Posterior vena cava (tissue), 2 donors: ENCODE measurements at regions of chr9 and their contacts with region 1.

Region 1: DNA sequence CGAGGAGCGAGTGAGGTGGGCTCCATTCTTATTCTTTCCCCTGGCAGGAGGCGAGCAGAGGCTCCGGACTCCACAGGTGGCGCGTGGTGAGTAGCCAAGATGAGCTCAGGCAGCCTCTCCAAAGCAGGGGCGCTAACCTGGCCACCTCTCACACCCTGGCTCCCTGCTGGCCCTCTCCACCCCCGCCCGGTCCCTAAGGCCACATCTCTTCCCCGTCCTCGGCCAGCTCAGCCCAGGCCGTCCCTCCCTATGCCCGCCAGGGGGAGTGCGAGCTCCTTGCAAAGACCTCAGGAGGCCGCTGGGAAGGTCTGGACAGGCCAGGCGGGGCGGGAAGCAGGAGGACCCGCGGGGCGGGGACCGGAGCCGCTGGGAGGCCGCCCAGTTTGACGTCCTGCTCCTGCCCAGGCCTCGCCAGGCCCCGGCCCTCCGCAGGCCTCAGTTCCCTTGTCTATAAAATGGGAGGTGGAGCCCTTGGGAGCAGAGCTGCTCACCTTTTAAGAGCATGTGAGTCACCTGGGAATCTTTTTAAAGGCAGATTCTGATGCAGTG is 46.3 kb upstream of the GGTA1 start:
- DNase-seq: peak; percentile 99

Region 2: DNA sequence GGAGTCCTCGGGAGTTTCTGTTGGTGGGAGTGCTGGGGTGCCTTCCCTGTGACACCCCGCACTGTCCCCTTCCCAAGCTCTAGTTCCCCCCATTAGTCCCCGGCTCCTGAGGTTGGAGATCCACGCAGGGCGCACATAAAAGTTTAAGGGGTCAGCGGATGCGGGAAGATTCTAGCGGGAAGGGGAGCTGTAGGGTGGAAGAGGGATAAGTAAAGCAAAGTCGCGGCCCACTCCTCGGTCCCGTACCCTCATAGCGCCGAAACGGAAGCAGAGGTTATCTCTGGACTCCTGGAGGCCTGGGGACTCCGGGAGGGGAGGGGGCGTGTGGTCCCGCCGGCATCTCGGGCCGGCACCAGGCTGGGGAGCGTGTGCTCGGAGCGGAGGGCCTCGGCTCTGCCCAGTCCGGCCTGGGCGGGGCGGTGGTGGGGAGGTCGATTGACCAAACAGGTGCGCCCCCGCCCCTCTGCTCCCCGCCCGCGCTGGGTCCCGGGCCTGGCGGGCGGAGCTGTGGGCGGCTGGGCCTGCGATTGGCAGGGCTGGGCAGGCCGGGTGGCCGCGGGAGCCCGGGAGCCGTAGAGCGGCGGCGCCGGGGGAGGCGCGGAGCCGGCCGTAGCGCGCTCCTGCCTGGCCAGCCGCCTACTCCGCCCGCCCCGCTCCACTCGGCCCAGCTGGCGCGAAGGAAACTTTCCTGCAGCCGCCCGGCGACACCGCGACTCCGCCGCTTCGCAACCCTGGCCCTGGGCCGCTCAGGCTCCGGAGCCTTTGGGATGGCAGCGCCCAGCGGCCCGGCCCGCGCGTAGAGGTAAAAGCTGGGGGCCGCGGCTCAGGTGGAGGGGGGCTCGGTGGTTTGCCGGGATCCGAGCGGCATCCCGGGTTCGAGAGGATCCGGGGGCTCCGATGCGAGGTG is 53.3 kb after region 1 on chr9:
- intact Hi-C with region 1: loop called in 1 of 2 experiments (anchors 5 kb)
- DNase-seq: no peak

Region 3: DNA sequence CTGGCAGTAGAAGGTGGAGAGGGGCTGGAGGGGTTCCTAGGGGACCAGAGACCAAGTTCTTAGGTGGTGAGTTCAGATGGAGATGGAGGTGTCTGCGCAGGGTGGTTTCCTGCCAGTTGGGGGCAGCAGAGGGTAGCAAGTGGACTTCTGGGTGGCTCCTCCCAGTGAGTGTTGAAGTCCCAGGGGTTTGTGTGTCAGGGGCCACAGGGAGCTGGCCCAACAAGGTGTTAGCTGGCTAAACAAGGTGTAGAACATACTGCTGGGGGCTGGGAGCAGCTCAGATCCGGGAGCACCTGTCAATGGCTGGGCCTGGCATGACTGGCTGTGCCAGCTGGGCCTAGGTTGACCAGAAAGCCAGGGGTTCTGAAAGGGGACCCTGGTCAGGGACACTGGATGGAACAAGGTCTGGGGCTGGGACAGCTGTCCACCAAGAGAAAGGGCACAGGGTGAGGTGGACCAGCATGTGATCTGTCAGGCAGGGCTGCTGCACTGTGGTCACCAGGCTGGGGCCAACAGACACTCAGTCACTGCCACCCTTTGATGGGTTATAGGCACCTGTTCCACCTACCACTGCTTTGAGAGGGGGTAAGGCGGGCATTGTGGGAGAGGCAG is 141.1 kb after region 1 on chr9:
- intact Hi-C with region 1: loop called (anchors 5 kb)
- DNase-seq: peak; percentile 89

Region 4: GRCh38 chr9:121735065-121735789 is 189.3 kb after region 1 on chr9:
- intact Hi-C with region 1: loop called in 1 of 2 experiments (anchors 5 kb)
- DNase-seq: no peak

Region 5: GRCh38 chr9:121992571-121993212 is 446.7 kb after region 1 on chr9:
- intact Hi-C with region 1: loop called (anchors 5 kb)
- DNase-seq: peak; percentile 83